Endothelial cell of umbilical vein (primary cell): ENCODE measurements at regions of chr2 and their contacts with region 1.

Region 1: DNA sequence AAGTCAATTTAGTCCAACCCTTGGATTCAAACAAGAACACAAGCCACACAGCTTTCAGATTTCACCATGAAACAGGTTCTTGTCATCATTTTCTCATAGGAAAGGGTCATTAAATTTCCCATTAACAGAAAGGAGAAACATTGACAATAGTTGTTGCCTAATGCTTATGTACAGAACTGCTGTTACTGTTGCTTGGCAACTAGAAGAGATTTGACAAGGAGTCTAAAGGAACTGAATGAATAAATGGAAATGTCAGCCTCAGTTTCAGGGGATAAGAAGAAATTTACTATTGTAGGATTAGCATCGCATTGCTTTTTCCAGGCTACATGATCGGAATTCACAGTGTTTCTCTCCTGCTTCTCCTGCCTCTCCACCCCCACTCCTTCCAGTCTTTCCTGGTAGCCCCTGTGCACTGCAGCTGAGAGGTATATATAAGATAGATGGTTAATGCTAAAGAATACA is 90.3 kb downstream of the SPATS2L start:
- DNase-seq: peak; percentile 32
- H3K4me3 ChIP-seq: no peak overlapping the region
- H3K27ac ChIP-seq: no peak overlapping the region
- H3K4me1 ChIP-seq: peaks cover 28% of the 10 kb centered on the region
- H3K27me3 ChIP-seq: no peaks in the 10 kb centered on the region
- CTCF ChIP-seq: no peak
- POLR2A ChIP-seq: no peak

Region 2: DNA sequence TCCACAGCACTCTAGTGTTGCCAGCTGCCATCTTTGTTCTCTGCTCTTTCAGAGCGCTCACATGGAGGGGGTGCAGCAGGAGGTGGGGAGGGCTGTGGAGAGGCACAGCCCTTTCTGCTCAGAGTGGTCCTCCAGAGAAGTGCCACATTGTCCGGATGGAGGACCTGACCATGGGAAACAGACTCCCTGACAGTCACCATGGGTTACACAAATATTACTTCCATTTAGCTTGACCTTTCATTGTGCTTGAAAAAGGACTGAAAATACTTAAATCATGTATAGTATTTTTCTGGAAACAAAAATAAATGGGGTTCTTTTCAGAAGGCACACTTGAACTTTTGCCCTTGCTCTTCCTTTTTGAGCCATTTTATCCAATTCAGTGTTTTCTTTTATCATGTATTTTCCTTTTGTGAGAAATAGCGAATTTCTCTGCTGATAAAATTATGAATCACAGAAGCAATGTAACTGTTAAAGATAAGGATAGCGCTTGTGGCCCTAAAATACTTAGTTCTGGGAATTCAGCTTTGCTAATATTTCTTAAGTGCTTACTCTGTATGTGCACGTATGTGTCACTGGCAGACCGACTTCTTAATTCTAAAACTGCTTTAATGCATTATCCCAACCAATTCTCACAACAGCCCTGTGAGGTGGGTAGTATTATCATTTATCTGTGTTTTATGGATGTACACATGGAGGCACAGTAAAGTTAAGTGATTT is 56.1 kb before region 1 on chr2:
- CTCF ChIA-PET with region 1: no interaction called
- POLR2A ChIA-PET with region 1: no interaction called
- dilution Hi-C with region 1: no loop called
- intact Hi-C with region 1: no loop called
- DNase-seq: peak; percentile 56
- H3K4me3 ChIP-seq: no peak overlapping the region
- H3K27ac ChIP-seq: no peak overlapping the region
- H3K4me1 ChIP-seq: peaks cover 11% of the 10 kb centered on the region
- H3K27me3 ChIP-seq: no peaks in the 10 kb centered on the region
- CTCF ChIP-seq: no peak
- POLR2A ChIP-seq: no peak

Region 3: GRCh38 chr2:200383383-200384110 is 13.3 kb before region 1 on chr2:
- CTCF ChIA-PET with region 1: interaction called, 7 read pairs
- POLR2A ChIA-PET with region 1: no interaction called
- dilution Hi-C with region 1: no loop called
- intact Hi-C with region 1: loop called (anchors 2 kb)
- DNase-seq: peak; percentile 83
- H3K4me3 ChIP-seq: peak overlapping the region in 2 of 3 experiments; percentile 29 to 61
- H3K27ac ChIP-seq: peak overlapping the region; percentile 67
- H3K4me1 ChIP-seq: peaks cover 35% of the 10 kb centered on the region
- H3K27me3 ChIP-seq: no peaks in the 10 kb centered on the region
- CTCF ChIP-seq: no peak
- POLR2A ChIP-seq: no peak